OCI-LY7 (cell line): ENCODE measurements at regions of chr11 and their contacts with region 1.

Region 1: GRCh38 chr11:46389450-46390253 is 1.9 kb downstream of the CHRM4 start:
- DNase-seq: peak; percentile 64
- H3K4me3 ChIP-seq: peak overlapping the region; percentile 50
- H3K27ac ChIP-seq: no peak overlapping the region
- H3K4me1 ChIP-seq: no peaks in the 10 kb centered on the region
- CTCF ChIP-seq: peak; percentile 85

Region 2: DNA sequence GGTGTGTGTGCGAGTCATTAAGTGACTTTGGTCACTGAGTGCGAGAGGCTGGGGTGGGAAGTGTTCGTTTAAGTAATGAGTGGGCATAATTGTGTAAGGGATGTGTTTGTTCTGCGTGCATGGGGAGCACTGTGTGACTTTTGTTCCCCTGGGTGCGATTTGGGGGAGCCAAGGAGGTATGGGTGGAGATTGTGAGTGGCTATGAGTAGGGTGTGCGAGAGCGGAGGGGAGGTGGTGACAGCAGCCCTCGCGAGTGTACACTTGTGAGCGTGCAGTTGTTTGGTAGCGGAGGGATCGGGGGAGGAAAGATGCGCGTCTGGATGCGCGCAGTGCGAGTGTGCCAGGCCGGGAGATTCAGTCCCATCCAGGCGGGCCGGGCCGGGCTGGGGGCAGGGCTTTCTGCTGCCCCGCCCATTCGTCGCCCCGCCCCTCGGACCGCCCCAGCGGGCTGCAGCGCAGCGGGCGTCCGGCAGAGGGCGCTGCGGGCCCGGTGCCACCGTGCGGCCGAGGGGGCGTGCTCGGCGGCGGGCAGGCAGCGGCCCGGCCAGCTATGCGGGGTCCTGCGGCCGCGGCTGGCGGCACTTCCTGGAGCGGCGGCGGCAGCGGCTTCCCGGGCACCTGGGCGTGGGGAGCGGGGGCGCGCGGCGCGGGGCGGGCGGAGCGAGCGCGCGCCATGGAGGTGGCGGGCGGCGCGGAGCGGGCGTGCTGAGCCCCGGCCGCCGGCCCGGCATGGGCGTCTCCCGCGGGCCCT is 42.6 kb before region 1 on chr11 and contains the start of gene DGKZ:
- CTCF ChIA-PET with region 1: no interaction called
- POLR2A ChIA-PET with region 1: no interaction called
- intact Hi-C with region 1: no loop called
- DNase-seq: peak; percentile 89
- H3K4me3 ChIP-seq: peak within 1 kb of the TSS; percentile 100
- H3K27ac ChIP-seq: peak within 1 kb of the TSS; percentile 49
- H3K4me1 ChIP-seq: peaks cover 55% of the 10 kb centered on the region
- CTCF ChIP-seq: peak; percentile 70
- total RNA-seq, gene DGKZ: 110 and 134 TPM in 2 replicates

Region 3: GRCh38 chr11:46529095-46529905 is 139.6 kb after region 1 on chr11:
- CTCF ChIA-PET with region 1: no interaction called
- POLR2A ChIA-PET with region 1: no interaction called
- intact Hi-C with region 1: loop called (anchors 1 kb)
- DNase-seq: peak; percentile 76
- H3K4me3 ChIP-seq: no peak overlapping the region
- H3K27ac ChIP-seq: no peak overlapping the region
- H3K4me1 ChIP-seq: peaks cover 15% of the 10 kb centered on the region
- CTCF ChIP-seq: peak; percentile 96